ENCODE measurements at regions of chr1 and their contacts with region 1.

Region 1: DNA sequence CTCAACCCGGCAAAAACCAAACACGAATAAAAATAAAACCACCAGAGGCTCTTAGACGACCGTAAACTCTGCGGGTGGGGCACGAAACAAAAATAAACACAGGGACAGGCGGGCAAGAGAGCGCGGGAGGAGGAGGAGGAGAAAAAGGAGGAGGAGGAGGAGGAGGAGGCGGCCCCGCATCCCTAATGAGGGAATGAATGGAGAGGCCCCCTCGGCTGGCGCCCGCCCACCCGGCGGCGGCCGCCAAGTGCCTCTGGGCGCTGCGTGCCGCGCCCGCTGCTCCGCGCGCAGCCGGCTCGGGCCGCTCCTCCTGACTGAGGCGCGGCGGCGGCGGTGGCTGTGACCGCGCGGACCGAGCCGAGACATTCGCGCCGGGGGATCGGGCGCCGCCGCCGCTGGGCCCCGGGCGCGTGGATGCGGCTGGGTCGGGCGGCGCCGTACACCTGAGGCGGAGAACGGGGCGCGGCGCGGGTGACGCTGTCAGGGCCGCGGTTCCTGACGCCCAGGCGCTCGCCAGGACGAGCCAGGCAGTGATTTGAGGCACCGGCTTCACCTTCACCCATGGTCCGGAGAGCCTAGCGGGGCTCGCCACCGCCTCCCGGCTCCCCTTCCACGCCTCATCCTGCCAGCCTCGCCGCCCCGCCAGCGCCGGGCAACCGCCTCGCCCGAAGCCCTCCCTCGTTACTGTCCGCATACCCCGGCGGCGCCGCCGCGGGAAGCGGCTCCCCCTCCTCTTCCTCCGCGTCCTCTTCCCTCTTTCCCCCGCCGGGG is at the start of gene MARK1:
- DNase-seq: peak; percentile 89
- ATAC-seq: peak; percentile 95
- total RNA-seq, gene MARK1: 17.3 TPM

Region 2: GRCh38 chr1:220217383-220217988 is 310.6 kb before region 1 on chr1:
- intact Hi-C with region 1: loop called (anchors 10 kb)
- DNase-seq: no peak
- ATAC-seq: no peak

Region 3: GRCh38 chr1:220272047-220272840 is 255.8 kb before region 1 on chr1 and contains the start of gene RAB3GAP2:
- intact Hi-C with region 1: loop called (anchors 5 kb)
- DNase-seq: peak; percentile 96
- ATAC-seq: peak; percentile 97
- total RNA-seq, gene RAB3GAP2: 22.1 TPM

Region 4: DNA sequence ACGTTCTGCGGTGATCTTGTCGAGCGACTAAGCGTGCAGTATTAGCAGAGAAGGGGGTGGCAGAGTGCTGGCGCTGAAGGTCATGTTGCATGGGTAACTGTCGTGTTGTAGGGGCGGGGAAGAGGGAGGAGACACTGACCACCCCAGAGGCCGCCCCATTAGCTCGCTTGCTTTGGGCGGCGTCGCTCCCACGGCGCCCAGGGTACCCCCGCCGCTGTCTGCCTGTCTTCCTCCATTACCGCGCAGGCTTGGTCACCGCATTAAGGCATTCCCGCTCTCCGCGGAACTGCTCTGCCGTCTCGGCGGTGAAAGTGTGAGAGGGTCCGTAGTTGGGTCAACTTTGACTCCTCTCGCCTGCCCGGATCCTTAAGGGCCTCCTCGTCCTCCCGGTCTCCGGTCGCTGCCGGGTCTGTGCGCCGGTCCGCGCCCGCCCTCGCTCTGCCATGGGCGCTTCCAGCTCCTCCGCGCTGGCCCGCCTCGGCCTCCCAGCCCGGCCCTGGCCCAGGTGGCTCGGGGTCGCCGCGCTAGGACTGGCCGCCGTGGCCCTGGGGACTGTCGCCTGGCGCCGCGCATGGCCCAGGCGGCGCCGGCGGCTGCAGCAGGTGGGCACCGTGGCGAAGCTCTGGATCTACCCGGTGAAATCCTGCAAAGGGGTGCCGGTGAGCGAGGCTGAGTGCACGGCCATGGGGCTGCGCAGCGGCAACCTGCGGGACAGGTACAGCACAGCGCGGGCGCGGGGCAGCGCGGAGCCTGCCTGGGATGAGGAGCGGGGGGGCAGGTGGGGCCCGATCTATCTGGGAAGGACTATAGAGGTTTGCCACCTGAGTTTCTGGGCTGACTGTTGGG is 220.2 kb after region 1 on chr1 and contains the start of gene MTARC2:
- intact Hi-C with region 1: loop called (anchors 10 kb)
- DNase-seq: peak; percentile 90
- ATAC-seq: peak; percentile 98
- total RNA-seq, gene MTARC2: 27.4 TPM

Region 5: DNA sequence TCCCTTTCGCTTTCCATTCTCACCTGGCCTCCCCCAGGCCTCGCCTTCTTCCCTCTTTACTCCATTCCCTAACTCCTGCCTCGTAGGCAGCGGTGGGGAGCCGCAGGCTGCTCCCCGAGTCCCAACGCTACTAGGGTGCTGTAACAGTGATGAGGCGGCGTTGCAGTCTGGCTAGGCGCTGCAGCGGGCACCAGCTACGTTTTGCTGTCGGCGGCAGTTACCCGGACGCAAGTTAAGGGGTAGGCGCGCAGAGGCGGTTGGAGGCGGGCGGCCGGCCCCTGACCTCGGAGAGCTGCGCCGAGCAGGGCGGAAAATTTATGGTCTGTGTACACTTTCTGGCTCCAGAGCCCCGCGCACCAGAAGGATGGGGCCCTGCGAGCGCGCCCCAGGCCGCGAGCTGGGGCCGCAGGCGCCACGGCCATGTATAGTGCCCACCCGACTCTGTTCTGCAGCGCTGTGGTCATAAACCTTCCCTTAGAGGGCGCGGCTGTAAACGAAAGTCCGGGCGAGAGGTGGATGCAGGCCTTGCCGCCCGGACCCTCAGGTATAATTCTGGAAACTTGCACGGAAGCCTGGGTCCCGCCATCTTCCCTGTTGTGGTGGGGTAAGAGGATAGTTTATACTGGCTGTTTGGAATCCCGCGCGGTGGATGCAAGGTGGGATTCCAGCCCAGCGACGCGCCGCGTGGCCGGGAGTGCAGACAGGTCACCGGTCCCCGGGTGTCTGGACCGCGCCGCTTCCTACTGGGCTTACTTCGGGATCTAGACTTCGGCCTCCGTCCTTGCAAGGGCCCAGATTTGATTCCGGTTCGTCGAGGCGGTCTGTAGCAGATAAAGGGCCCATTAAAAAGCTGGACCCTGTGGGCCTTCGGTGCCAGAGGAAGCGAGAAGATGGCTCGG is 366.2 kb after region 1 on chr1:
- intact Hi-C with region 1: no loop called
- DNase-seq: peak; percentile 68
- ATAC-seq: peak; percentile 50

Measured in Right ventricle myocardium inferior (tissue), 1 donor.